ENCODE measurements at regions of chr18 and their contacts with region 1.

Region 1: GRCh38 chr18:62584241-62585120 is 61.7 kb downstream of the ZCCHC2 start:
- DNase-seq: peak; percentile 69 to 92 (median 78)
- ATAC-seq: peak; percentile 97
- H3K4me3 ChIP-seq: no peak overlapping the region
- H3K4me3 Mint-ChIP-seq: peak overlapping the region; percentile 16
- H3K27ac ChIP-seq: no peak overlapping the region
- H3K27ac Mint-ChIP-seq: peak overlapping the region; percentile 32
- H3K4me1 ChIP-seq: peaks cover 28% of the 10 kb centered on the region
- H3K4me1 Mint-ChIP-seq: peaks cover 33% of the 10 kb centered on the region
- H3K27me3 ChIP-seq: no peaks in the 10 kb centered on the region
- H3K27me3 Mint-ChIP-seq: no peaks in the 10 kb centered on the region
- CTCF ChIP-seq: peak; percentile 98

Region 2: GRCh38 chr18:61459896-61460648 is 1124.4 kb before region 1 on chr18:
- CTCF ChIA-PET with region 1: no interaction called
- POLR2A ChIA-PET with region 1: no interaction called
- intact Hi-C with region 1: no loop called
- DNase-seq: no peak
- ATAC-seq: no peak
- H3K4me3 ChIP-seq: no peak overlapping the region
- H3K4me3 Mint-ChIP-seq: no peak overlapping the region
- H3K27ac ChIP-seq: no peak overlapping the region
- H3K27ac Mint-ChIP-seq: no peak overlapping the region
- H3K4me1 ChIP-seq: no peaks in the 10 kb centered on the region
- H3K4me1 Mint-ChIP-seq: no peaks in the 10 kb centered on the region
- H3K27me3 ChIP-seq: peaks cover 0 to 3% of the 10 kb centered on the region in 2 experiments
- H3K27me3 Mint-ChIP-seq: peaks cover 11% of the 10 kb centered on the region
- CTCF ChIP-seq: no peak

Region 3: DNA sequence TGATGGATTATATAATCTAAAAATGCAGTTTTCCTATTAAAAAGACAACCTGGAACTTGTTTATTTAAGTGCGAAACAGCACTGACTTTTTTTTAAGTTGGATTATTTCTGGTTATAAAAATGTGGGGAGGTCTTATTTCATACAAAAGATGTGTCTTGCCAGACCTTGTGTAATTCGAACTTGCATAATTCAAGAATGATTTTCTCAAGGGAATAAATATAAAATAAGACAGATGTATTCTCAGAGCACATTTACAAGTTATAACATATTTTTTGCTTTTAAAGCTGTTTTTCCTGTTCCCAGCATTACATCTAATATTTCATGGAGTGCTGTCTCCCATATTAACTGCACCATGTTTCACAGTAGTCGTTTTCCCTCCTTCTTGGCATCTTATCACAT is 988.2 kb before region 1 on chr18:
- CTCF ChIA-PET with region 1: no interaction called
- POLR2A ChIA-PET with region 1: no interaction called
- intact Hi-C with region 1: no loop called
- DNase-seq: no peak
- ATAC-seq: no peak
- H3K4me3 ChIP-seq: no peak overlapping the region
- H3K4me3 Mint-ChIP-seq: no peak overlapping the region
- H3K27ac ChIP-seq: no peak overlapping the region
- H3K27ac Mint-ChIP-seq: no peak overlapping the region
- H3K4me1 ChIP-seq: no peaks in the 10 kb centered on the region
- H3K4me1 Mint-ChIP-seq: no peaks in the 10 kb centered on the region
- H3K27me3 ChIP-seq: no peaks in the 10 kb centered on the region
- H3K27me3 Mint-ChIP-seq: peaks cover 15% of the 10 kb centered on the region
- CTCF ChIP-seq: no peak

Region 4: GRCh38 chr18:62324917-62325805 is 259.3 kb before region 1 on chr18 and contains the start of gene TNFRSF11A:
- CTCF ChIA-PET with region 1: no interaction called
- POLR2A ChIA-PET with region 1: no interaction called
- intact Hi-C with region 1: loop called (anchors 2 to 5 kb)
- DNase-seq: peak; percentile 30 to 80 (median 56)
- ATAC-seq: peak; percentile 87
- H3K4me3 ChIP-seq: peak within 1 kb of the TSS; percentile 61
- H3K4me3 Mint-ChIP-seq: peak within 1 kb of the TSS; percentile 88
- H3K27ac ChIP-seq: no peak within 1 kb of the TSS
- H3K27ac Mint-ChIP-seq: no peak within 1 kb of the TSS
- H3K4me1 ChIP-seq: peaks cover 35% of the 10 kb centered on the region
- H3K4me1 Mint-ChIP-seq: peaks cover 40% of the 10 kb centered on the region
- H3K27me3 ChIP-seq: peaks cover 36 to 46% of the 10 kb centered on the region in 2 experiments
- H3K27me3 Mint-ChIP-seq: peaks cover 78% of the 10 kb centered on the region
- CTCF ChIP-seq: no peak
- total RNA-seq, gene TNFRSF11A: 1.7 TPM

Region 5: GRCh38 chr18:62425465-62426195 is 158.9 kb before region 1 on chr18:
- CTCF ChIA-PET with region 1: interaction called, 17 read pairs
- POLR2A ChIA-PET with region 1: interaction called, 5 read pairs
- intact Hi-C with region 1: loop called (anchors 1 kb)
- DNase-seq: peak in 13 of 14 experiments; percentile 5 to 85 (median 31)
- ATAC-seq: peak; percentile 51
- H3K4me3 ChIP-seq: no peak overlapping the region
- H3K4me3 Mint-ChIP-seq: no peak overlapping the region
- H3K27ac ChIP-seq: no peak overlapping the region
- H3K27ac Mint-ChIP-seq: no peak overlapping the region
- H3K4me1 ChIP-seq: peaks cover 12% of the 10 kb centered on the region
- H3K4me1 Mint-ChIP-seq: peaks cover 18% of the 10 kb centered on the region
- H3K27me3 ChIP-seq: no peaks in the 10 kb centered on the region
- H3K27me3 Mint-ChIP-seq: no peaks in the 10 kb centered on the region
- CTCF ChIP-seq: peak; percentile 83

Region 6: DNA sequence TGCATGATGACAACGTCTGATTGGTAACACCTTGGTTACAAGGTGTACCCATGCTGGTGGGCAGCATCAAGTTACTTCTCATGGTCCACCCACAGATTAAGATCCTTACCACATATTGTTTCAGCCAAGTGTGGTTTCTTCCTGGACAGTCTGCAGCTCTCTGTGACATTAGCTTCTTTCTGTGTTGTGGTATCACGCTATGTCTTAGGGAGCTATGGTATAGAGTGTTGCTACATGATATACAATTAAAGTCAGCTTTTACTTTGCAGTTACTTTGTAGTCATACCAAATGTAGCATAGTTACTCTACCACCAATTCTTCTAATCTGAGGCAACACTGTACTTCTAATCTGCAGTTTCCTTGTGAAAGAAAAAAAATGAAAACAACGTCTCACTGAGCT is 12.8 kb before region 1 on chr18:
- CTCF ChIA-PET with region 1: interaction called, 10 read pairs
- POLR2A ChIA-PET with region 1: no interaction called
- intact Hi-C with region 1: no loop called
- DNase-seq: no peak
- ATAC-seq: no peak
- H3K4me3 ChIP-seq: no peak overlapping the region
- H3K4me3 Mint-ChIP-seq: no peak overlapping the region
- H3K27ac ChIP-seq: no peak overlapping the region
- H3K27ac Mint-ChIP-seq: no peak overlapping the region
- H3K4me1 ChIP-seq: no peaks in the 10 kb centered on the region
- H3K4me1 Mint-ChIP-seq: peaks cover 1% of the 10 kb centered on the region
- H3K27me3 ChIP-seq: no peaks in the 10 kb centered on the region
- H3K27me3 Mint-ChIP-seq: no peaks in the 10 kb centered on the region
- CTCF ChIP-seq: no peak

Region 7: DNA sequence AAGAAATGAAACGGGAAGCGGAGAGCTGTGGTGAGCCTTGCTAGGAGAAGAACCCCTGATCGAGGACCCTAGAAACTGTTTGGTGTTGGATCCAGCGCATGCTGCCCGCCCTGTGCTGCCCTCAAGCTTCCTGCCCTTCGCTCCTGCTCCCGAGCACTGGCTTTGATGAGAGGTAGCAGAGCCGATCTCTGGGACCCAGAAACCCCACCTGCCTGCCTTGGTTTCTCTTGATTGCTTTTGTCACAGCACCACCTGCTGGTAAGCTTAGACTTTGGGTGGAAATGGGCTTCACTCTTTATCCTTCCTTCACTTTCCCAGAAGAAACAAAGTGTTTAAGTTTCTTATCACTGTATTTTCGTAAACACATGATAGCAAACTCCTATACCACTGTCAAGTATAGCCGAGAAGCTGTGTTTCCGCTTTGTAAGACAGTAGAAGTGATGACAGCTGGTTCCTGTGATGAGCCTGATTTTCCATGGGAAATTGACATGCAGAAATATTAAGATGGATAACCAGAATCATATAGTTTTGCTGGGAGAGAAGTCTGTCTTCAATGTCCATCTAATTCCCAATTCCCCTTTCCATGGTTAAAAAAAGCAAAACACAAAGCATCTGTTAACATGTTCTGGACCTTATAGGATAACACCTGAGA is 398.2 kb after region 1 on chr18:
- CTCF ChIA-PET with region 1: no interaction called
- POLR2A ChIA-PET with region 1: no interaction called
- intact Hi-C with region 1: loop called in 1 of 2 experiments (anchors 2 kb)
- DNase-seq: peak in 13 of 14 experiments; percentile 27 to 76 (median 37)
- ATAC-seq: peak; percentile 74
- H3K4me3 ChIP-seq: peak overlapping the region; percentile 20
- H3K4me3 Mint-ChIP-seq: peak overlapping the region; percentile 48
- H3K27ac ChIP-seq: no peak overlapping the region
- H3K27ac Mint-ChIP-seq: no peak overlapping the region
- H3K4me1 ChIP-seq: peaks cover 6% of the 10 kb centered on the region
- H3K4me1 Mint-ChIP-seq: no peaks in the 10 kb centered on the region
- H3K27me3 ChIP-seq: no peaks in the 10 kb centered on the region
- H3K27me3 Mint-ChIP-seq: no peaks in the 10 kb centered on the region
- CTCF ChIP-seq: peak; percentile 75